Posterior vena cava (tissue), 2 donors: ENCODE measurements at regions of chr3 and their contacts with region 1.

Region 1: GRCh38 chr3:136819731-136820679 is 1.1 kb downstream of the SLC35G2 start:
- DNase-seq: peak; percentile 90

Region 2: DNA sequence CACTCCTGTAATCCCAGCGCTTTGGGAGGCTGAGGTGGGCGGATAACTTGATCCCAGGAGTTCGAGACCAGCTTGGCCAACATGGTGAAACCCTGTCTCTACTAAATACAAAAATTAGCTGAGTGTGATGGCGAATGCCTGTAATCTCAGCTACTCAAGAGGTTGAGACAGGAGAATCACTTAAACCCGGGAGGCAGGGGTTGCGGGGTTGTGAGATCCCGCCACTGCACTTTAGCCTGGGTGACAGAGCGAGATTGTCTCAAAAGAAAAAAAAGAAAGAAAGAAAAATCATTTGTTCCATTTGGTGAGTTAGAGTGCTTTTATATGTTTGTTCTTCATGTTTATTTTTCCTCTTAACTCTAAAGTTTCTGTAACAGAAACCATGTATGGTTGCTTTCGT is 49.3 kb after region 1 on chr3:
- intact Hi-C with region 1: no loop called
- DNase-seq: no peak

Region 3: GRCh38 chr3:137759505-137759904 is 939.5 kb after region 1 on chr3:
- intact Hi-C with region 1: loop called in 1 of 2 experiments (anchors 5 kb)
- DNase-seq: peak; percentile 62